K562 (cell line): ENCODE measurements at regions of chr6 and their contacts with region 1.

Region 1: GRCh38 chr6:13614926-13615798 is at the start of gene NOL7:
- DNase-seq: peak; percentile 98 to 99 (median 98)
- ATAC-seq: peak; percentile 89
- H3K4me3 ChIP-seq: peak within 1 kb of the TSS; percentile 80
- H3K27ac ChIP-seq: peak within 1 kb of the TSS; percentile 92
- H3K4me1 ChIP-seq: peaks cover 11 to 25% of the 10 kb centered on the region in 2 experiments
- H3K27me3 ChIP-seq: no peaks in the 10 kb centered on the region
- CTCF ChIP-seq: peak; percentile 84 to 93 (median 89)
- EP300 ChIP-seq: no peak
- POLR2A ChIP-seq: peak; percentile 96
- RAD21 ChIP-seq: peak; percentile 20 to 26; a peak in 3 of 4 replicates
- polyA plus RNA-seq, gene NOL7: 19.4 to 23.4 TPM

Region 2: GRCh38 chr6:13574149-13574570 is 41.0 kb before region 1 on chr6:
- CTCF ChIA-PET with region 1: no interaction called
- POLR2A ChIA-PET with region 1: interaction called, 16 read pairs
- in situ Hi-C with region 1: no loop called
- intact Hi-C with region 1: loop called (anchors 2 kb)
- DNase-seq: peak; percentile 97 to 99 (median 98)
- ATAC-seq: peak; percentile 90
- H3K4me3 ChIP-seq: peak overlapping the region; percentile 56
- H3K27ac ChIP-seq: peak overlapping the region; percentile 87
- H3K4me1 ChIP-seq: peaks cover 17 to 20% of the 10 kb centered on the region in 2 experiments
- H3K27me3 ChIP-seq: no peaks in the 10 kb centered on the region; a peak in 1 of 5 replicates
- CTCF ChIP-seq: peak; percentile 49 to 88 (median 74); a peak in 5 of 6 replicates
- EP300 ChIP-seq: no peak
- POLR2A ChIP-seq: no peak
- RAD21 ChIP-seq: peak; percentile 59 to 66

Region 3: GRCh38 chr6:13604546-13605416 is 10.4 kb before region 1 on chr6:
- CTCF ChIA-PET with region 1: no interaction called
- POLR2A ChIA-PET with region 1: interaction called, 31 read pairs
- in situ Hi-C with region 1: no loop called
- intact Hi-C with region 1: no loop called
- DNase-seq: no peak
- ATAC-seq: peak; percentile 47; the same call in 2 of the 3 replicates
- H3K4me3 ChIP-seq: no peak overlapping the region
- H3K27ac ChIP-seq: peak overlapping the region; percentile 3; the same call in 1 of the 3 replicates
- H3K4me1 ChIP-seq: peaks cover 0 to 2% of the 10 kb centered on the region in 2 experiments; a peak in 2 of 5 replicates
- H3K27me3 ChIP-seq: no peaks in the 10 kb centered on the region
- CTCF ChIP-seq: no peak
- EP300 ChIP-seq: no peak
- POLR2A ChIP-seq: no peak
- RAD21 ChIP-seq: no peak

Region 4: DNA sequence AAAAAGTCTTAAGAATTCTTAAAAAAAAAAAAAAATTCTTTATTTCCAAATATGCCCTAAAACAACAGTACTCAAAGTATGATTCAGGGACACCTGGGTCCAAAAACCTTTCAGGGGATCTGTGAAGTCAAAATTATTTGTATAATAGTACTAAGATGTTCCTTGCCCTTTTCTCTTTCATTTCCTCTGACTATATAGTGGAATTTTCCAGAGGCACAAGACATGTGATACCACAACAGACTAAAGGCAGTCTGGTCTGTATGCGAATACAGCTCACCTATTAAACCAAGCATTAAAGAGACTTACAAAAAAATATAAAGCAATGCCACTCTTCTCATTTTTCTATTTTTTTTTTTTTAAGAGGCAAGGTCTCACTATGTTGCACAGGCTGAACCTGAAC is 15.3 kb after region 1 on chr6:
- CTCF ChIA-PET with region 1: interaction called, 3 read pairs
- POLR2A ChIA-PET with region 1: interaction called, 31 read pairs
- in situ Hi-C with region 1: no loop called
- intact Hi-C with region 1: no loop called
- DNase-seq: no peak
- ATAC-seq: no peak
- H3K4me3 ChIP-seq: no peak overlapping the region
- H3K27ac ChIP-seq: no peak overlapping the region
- H3K4me1 ChIP-seq: no peaks in the 10 kb centered on the region
- H3K27me3 ChIP-seq: no peaks in the 10 kb centered on the region
- CTCF ChIP-seq: no peak
- EP300 ChIP-seq: no peak
- POLR2A ChIP-seq: no peak
- RAD21 ChIP-seq: no peak

Region 5: GRCh38 chr6:13678255-13678983 is 63.3 kb after region 1 on chr6:
- CTCF ChIA-PET with region 1: no interaction called
- POLR2A ChIA-PET with region 1: interaction called, 4 read pairs
- in situ Hi-C with region 1: no loop called
- intact Hi-C with region 1: loop called (anchors 5 kb)
- DNase-seq: peak; percentile 78 to 96 (median 88)
- ATAC-seq: peak; percentile 75
- H3K4me3 ChIP-seq: peak overlapping the region; percentile 42
- H3K27ac ChIP-seq: peak overlapping the region; percentile 81
- H3K4me1 ChIP-seq: peaks cover 13 to 28% of the 10 kb centered on the region in 2 experiments
- H3K27me3 ChIP-seq: no peaks in the 10 kb centered on the region
- CTCF ChIP-seq: no peak
- EP300 ChIP-seq: peak; percentile 98
- POLR2A ChIP-seq: peak; percentile 97
- RAD21 ChIP-seq: no peak; a peak in 1 of 4 replicates

Region 6: GRCh38 chr6:13711733-13712598 is 96.8 kb after region 1 on chr6 and contains the start of gene RANBP9:
- CTCF ChIA-PET with region 1: no interaction called
- POLR2A ChIA-PET with region 1: interaction called, 11 read pairs
- in situ Hi-C with region 1: no loop called
- intact Hi-C with region 1: loop called (anchors 2 kb)
- DNase-seq: peak; percentile 92 to 93 (median 93)
- ATAC-seq: peak; percentile 85
- H3K4me3 ChIP-seq: peak within 1 kb of the TSS; percentile 84
- H3K27ac ChIP-seq: peak within 1 kb of the TSS; percentile 93
- H3K4me1 ChIP-seq: peaks cover 14 to 16% of the 10 kb centered on the region in 2 experiments; a peak in 4 of 5 replicates
- H3K27me3 ChIP-seq: no peaks in the 10 kb centered on the region
- CTCF ChIP-seq: peak in 1 of 3 experiments; percentile 21; a peak in 1 of 6 replicates
- EP300 ChIP-seq: no peak
- POLR2A ChIP-seq: peak; percentile 82
- RAD21 ChIP-seq: peak; percentile 26 to 31; a peak in 3 of 4 replicates
- polyA plus RNA-seq, gene RANBP9: 27.5 to 31.2 TPM